PC-9 (cell line): ENCODE measurements at regions of chr6 and their contacts with region 1.

Region 1: DNA sequence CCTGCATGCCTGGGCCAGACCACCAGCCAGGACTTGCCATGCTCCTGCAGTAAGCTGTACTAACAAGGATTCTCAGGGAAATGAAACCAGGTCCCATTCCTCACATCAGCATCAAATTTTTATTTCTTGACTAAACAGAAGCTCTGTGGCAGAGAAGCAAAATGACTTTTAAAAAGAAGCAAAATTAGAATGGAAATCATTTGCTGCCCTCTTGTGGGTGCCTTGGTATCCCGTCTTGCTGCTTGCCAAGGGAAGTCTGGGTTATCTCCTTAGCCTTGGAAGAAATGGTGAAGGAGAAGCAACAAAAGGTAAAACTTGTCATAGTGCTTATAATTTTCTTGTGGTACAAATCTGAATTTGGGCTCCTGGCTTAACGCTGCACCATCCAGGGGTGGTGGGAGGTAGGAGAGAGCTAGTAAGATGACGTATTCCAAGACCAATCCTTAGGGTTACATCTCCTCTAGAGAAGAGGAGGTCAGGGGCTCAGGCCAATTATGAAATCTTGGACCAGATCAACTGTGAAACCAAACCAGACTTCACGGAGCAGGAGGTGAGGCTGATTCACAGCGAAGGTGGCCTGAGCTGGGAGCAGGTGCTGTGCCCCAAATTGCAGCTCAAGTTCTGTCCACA is 107.5 kb downstream of the FAXC start:
- DNase-seq: peak in 1 of 2 experiments; percentile 17
- H3K4me3 ChIP-seq: no peak overlapping the region
- H3K27ac ChIP-seq: no peak overlapping the region
- H3K4me1 ChIP-seq: no peaks in the 10 kb centered on the region
- H3K27me3 ChIP-seq: peaks cover 8% of the 10 kb centered on the region; the same call in 1 of the 2 replicates
- CTCF ChIP-seq: peak; percentile 67

Region 2: DNA sequence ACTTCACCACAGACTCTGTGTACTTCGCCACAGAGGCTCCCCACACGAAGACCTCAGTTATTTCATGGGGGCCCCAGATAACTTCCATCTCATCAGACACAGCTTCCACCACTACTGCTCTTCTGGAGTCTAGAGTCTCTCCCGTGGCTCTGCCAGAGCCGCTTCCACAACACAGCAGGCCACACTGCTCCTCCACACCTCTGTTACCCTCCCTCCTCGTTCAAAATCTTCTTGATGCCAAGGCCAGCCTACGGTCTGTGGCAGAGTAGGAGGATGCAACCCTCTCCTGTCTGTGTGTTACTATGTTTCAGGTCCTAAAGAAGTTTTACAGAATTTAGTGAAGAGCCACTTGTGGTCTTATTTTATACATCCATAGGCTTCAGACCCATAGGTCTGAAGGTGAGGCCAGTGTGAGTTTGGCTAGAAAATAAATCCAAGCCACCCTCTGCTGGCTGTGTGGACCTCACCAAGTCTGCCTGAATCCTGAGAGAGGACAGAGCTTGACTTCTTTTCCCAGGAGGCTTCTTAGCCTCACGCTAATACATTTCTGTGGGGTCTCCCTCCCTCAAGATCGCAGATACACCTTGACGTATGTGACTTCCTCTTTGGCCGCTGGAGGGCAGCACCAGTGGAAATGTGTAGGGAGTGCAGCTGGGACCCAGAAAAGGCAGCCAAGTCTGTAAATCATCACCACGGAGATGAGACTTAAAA is 90.2 kb before region 1 on chr6:
- CTCF ChIA-PET with region 1: interaction called, 5 read pairs
- POLR2A ChIA-PET with region 1: no interaction called
- intact Hi-C with region 1: loop called (anchors 1 kb)
- DNase-seq: peak in 1 of 2 experiments; percentile 38
- H3K4me3 ChIP-seq: no peak overlapping the region
- H3K27ac ChIP-seq: no peak overlapping the region
- H3K4me1 ChIP-seq: no peaks in the 10 kb centered on the region
- H3K27me3 ChIP-seq: no peaks in the 10 kb centered on the region
- CTCF ChIP-seq: peak; percentile 90

Region 3: GRCh38 chr6:99254616-99255550 is 12.9 kb after region 1 on chr6:
- CTCF ChIA-PET with region 1: interaction called, 15 read pairs
- POLR2A ChIA-PET with region 1: no interaction called
- intact Hi-C with region 1: no loop called
- DNase-seq: no peak
- H3K4me3 ChIP-seq: no peak overlapping the region
- H3K27ac ChIP-seq: no peak overlapping the region
- H3K4me1 ChIP-seq: no peaks in the 10 kb centered on the region
- H3K27me3 ChIP-seq: peaks cover 24% of the 10 kb centered on the region; the same call in 1 of the 2 replicates
- CTCF ChIP-seq: no peak